BJ (cell line): ENCODE measurements at regions of chr7 and their contacts with region 1.

Region 1: GRCh38 chr7:98294796-98295382 is 13.4 kb downstream of the BRI3 start:
- DNase-seq: no peak
- H3K4me3 ChIP-seq: no peak overlapping the region
- H3K27me3 ChIP-seq: no peaks in the 10 kb centered on the region
- CTCF ChIP-seq: peak; percentile 81

Region 2: DNA sequence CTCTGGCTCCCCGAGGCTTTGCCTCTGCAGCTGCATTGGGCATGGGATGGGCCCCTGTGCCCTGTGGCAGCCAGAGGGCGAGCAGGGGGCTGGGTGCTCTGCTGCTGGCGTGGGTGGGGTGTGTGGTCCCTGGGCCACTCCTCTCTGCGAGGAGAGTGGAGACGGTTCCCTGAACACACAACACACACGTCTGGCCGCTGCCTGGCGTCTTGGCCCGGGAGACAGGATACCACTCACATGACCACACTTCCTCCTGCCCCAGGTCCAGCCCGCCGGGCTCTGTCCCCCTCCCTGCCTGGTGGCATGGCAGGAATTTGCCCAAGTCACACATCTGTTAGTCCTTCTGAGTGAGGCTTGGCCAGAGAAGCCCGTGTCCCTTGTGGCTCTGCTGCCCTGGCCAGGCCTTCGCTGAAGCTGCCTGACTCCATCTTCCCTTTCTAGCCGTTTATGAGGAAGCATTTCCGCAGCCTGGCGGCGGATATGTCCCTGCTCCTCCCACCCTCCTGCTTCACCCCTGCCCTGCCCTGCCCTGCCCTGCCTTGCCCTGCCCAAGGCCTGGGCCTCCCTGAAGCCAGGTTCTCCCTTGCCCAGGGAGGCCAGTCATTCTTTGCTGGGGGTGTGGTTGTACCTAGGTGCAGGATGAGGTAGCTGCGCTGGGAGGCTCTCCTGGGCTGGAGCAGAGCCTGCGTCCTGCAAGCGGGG is 10.4 kb before region 1 on chr7:
- CTCF ChIA-PET with region 1: interaction called, 18 read pairs
- POLR2A ChIA-PET with region 1: no interaction called
- DNase-seq: peak; percentile 79
- H3K4me3 ChIP-seq: peak overlapping the region; percentile 89
- H3K27me3 ChIP-seq: no peaks in the 10 kb centered on the region
- CTCF ChIP-seq: 0 out of 2 replicates have a peak, but pooled peaks have one; percentile 8